ENCODE measurements at regions of chr19 and their contacts with region 1.

Region 1: DNA sequence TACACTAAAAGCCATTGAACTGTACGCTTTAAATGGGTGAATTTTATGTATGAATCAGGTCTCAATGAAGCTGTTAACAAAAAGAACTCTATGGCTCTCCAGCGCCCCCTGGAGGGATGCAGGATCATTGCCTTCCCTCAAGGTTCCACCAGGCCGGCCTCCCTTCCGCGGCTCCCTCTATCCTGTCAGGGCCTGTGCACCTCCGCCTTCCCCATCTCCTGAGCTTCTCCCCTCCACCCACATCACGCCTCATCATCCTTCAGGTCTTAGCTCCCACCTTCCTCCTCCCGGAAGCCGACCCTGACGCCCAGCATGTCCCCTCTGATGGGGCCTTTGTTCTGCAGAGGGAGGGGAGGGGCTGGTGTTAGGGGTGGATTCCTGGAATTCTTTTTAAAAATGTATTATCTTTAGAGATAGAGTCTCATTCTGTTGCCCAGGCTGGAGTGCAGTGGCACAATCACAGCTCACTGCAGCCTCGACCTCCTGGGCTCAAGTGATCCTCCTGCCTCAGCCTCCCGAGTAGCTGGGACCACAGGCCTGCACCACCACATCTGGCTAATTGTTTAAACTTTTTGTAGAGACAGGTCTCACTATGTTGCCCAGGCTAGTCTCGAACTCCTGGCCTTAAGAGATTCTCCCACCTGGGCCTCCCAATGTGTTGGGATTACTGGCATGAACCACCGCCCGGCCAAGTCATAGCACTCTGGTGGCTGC is 27.7 kb downstream of the MEIS3 start:
- DNase-seq: peak; percentile 43 to 76
- ATAC-seq: peak; percentile 79

Region 2: GRCh38 chr19:47305309-47305751 is 86.3 kb before region 1 on chr19:
- intact Hi-C with region 1: loop called in 1 of 2 experiments (anchors 10 kb)
- DNase-seq: peak; percentile 48 to 68
- ATAC-seq: peak; percentile 49

Measured in left colon (tissue), 2 donors.